Activated CD8-positive, alpha-beta T cell treated with anti-CD3 and anti-CD28 coated beads for 36 hours (primary cell): ENCODE measurements at regions of chr12 and their contacts with region 1.

Region 1: GRCh38 chr12:109264095-109264942 is 44.8 kb downstream of the FOXN4 start:
- DNase-seq: peak; percentile 64
- ATAC-seq: peak; percentile 65
- H3K4me3 Mint-ChIP-seq: no peak overlapping the region
- H3K27ac Mint-ChIP-seq: no peak overlapping the region
- H3K4me1 Mint-ChIP-seq: no peaks in the 10 kb centered on the region
- H3K27me3 Mint-ChIP-seq: no peaks in the 10 kb centered on the region
- CTCF ChIP-seq: peak; percentile 72

Region 2: GRCh38 chr12:109250523-109250922 is 13.8 kb before region 1 on chr12:
- CTCF ChIA-PET with region 1: interaction called, 16 read pairs
- POLR2A ChIA-PET with region 1: no interaction called
- intact Hi-C with region 1: no loop called
- DNase-seq: no peak
- ATAC-seq: peak; percentile 51
- H3K4me3 Mint-ChIP-seq: no peak overlapping the region
- H3K27ac Mint-ChIP-seq: no peak overlapping the region
- H3K4me1 Mint-ChIP-seq: peaks cover 9% of the 10 kb centered on the region
- H3K27me3 Mint-ChIP-seq: no peaks in the 10 kb centered on the region
- CTCF ChIP-seq: no peak

Region 3: DNA sequence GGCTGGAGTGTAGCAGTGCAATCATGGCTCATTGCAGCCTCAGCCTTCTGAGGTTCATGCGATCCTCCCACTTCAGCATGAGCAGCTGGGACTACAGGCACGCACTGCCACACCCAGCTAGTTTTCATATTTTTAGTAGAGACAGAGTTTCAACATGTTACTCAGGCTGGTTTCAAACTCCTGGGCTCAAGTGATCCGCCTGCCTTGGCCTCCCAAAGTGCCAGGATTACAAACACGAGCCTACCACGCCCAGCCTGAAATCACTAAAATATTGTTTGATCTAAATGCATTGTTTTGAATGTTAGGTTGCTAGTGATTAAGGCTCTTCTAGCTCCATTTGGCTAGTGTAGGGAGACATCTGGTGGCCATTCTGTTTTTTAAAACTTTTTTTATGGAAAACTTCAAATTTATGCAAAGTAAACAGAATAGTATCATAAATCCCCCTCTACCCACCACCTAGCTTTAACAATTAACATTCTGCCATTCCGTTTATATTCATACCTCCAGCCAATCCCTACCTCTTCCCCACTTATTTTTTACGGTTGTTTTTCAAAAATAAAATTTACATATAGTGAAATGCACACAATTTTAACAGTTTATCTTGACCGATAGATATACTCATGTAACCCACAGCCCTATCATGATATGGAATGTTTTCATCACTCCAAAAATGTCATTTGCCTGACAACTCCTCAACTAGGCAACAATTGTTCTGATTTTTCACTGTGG is 121.2 kb after region 1 on chr12:
- CTCF ChIA-PET with region 1: interaction called, 16 read pairs
- POLR2A ChIA-PET with region 1: no interaction called
- intact Hi-C with region 1: loop called (anchors 5 kb)
- DNase-seq: no peak
- ATAC-seq: no peak
- H3K4me3 Mint-ChIP-seq: no peak overlapping the region
- H3K27ac Mint-ChIP-seq: no peak overlapping the region
- H3K4me1 Mint-ChIP-seq: no peaks in the 10 kb centered on the region
- H3K27me3 Mint-ChIP-seq: peaks cover 19% of the 10 kb centered on the region
- CTCF ChIP-seq: peak; percentile 51

Region 4: GRCh38 chr12:109393437-109394345 is 129.4 kb after region 1 on chr12:
- CTCF ChIA-PET with region 1: interaction called, 30 read pairs
- POLR2A ChIA-PET with region 1: no interaction called
- intact Hi-C with region 1: loop called (anchors 5 kb)
- DNase-seq: peak; percentile 51
- ATAC-seq: peak; percentile 83
- H3K4me3 Mint-ChIP-seq: no peak overlapping the region
- H3K27ac Mint-ChIP-seq: no peak overlapping the region
- H3K4me1 Mint-ChIP-seq: no peaks in the 10 kb centered on the region
- H3K27me3 Mint-ChIP-seq: peaks cover 22% of the 10 kb centered on the region
- CTCF ChIP-seq: peak; percentile 88